AG04449 (cell line): ENCODE measurements at regions of chr14 and their contacts with region 1.

Region 1: GRCh38 chr14:63770187-63770807 is 42.4 kb upstream of the SGPP1 start:
- DNase-seq: peak; percentile 21
- H3K4me3 ChIP-seq: no peak overlapping the region
- CTCF ChIP-seq: peak; percentile 55

Region 2: DNA sequence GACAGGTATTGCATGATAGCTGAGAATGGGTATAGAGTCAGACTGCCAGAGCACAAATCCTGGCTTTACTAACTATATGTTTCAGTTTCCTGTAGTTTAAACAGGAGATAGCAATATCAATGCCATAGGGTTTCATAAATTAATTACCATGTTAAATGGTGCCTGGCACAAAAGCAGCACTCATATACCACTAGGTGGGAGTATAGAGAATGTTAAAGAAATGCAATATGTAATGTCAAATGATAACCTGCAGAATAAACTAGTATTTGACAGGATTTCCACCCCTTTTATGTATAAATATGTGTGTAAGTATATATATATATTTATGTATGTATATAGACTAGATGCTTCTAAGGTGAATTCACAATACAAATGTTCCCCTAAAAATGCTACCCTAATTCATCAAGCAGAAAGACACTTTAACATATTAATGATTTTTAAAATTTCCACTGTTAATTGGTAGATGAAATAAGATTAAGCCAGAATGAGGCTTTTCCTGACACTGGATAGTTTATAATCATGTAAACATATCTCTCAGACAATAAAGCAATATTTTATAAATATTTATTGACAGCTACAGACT is 137.3 kb before region 1 on chr14:
- CTCF ChIA-PET with region 1: interaction called, 87 read pairs
- POLR2A ChIA-PET with region 1: no interaction called
- DNase-seq: no peak
- H3K4me3 ChIP-seq: no peak overlapping the region
- CTCF ChIP-seq: peak; percentile 35

Region 3: GRCh38 chr14:63641473-63642228 is 128.6 kb before region 1 on chr14 and contains the start of gene WDR89:
- CTCF ChIA-PET with region 1: interaction called, 10 read pairs
- POLR2A ChIA-PET with region 1: no interaction called
- DNase-seq: peak; percentile 98
- H3K4me3 ChIP-seq: peak within 1 kb of the TSS; percentile 95
- CTCF ChIP-seq: peak; percentile 56

Region 4: GRCh38 chr14:63891148-63891975 is 121.1 kb after region 1 on chr14:
- CTCF ChIA-PET with region 1: no interaction called
- POLR2A ChIA-PET with region 1: no interaction called
- DNase-seq: no peak
- H3K4me3 ChIP-seq: no peak overlapping the region
- CTCF ChIP-seq: no peak